Activated CD4-positive, alpha-beta memory T cell treated with anti-CD3 and anti-CD28 coated beads, Interleukin-2, amount 10 ng/mL, durations not matched to agents 7 days and 5 days (primary cell): ENCODE measurements at regions of chr11 and their contacts with region 1.

Region 1: GRCh38 chr11:75399344-75400145 is at the start of gene RPS3:
- DNase-seq: peak; percentile 92
- H3K4me3 Mint-ChIP-seq: peak within 1 kb of the TSS; percentile 96
- H3K27ac Mint-ChIP-seq: peak within 1 kb of the TSS; percentile 98
- H3K4me1 Mint-ChIP-seq: peaks cover 46% of the 10 kb centered on the region
- H3K27me3 Mint-ChIP-seq: peaks cover 6% of the 10 kb centered on the region
- total RNA-seq, gene RPS3: 2,828 to 2,853 TPM

Region 2: DNA sequence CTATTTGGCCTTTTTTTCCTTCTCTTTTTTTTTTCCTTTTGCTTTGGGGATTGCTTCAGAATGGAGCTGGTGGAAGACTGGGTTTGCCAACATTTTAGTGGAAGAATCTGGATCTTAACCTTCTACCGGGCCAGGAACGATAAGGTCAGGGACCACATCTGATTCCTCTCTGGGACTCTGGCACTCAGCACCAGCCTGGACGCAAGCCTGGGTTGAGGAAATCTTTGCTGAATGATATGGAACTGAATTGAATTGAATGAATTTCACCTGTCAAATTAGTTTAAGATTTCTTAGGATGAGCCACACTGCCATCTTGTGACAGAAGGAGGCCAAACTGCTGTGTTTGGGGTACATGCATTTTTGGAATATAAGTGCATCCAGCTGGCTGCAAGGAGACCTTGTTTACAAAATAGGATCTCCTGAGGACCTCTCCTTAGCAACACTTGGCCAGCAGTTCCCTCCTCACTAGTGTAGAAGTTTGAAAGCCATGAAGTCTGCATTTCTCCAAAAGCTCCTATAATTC is 128.6 kb before region 1 on chr11:
- CTCF ChIA-PET with region 1: interaction called, 13 read pairs
- POLR2A ChIA-PET with region 1: interaction called, 29 read pairs
- DNase-seq: peak; percentile 41
- H3K4me3 Mint-ChIP-seq: no peak overlapping the region
- H3K27ac Mint-ChIP-seq: no peak overlapping the region
- H3K4me1 Mint-ChIP-seq: peaks cover 23% of the 10 kb centered on the region
- H3K27me3 Mint-ChIP-seq: no peaks in the 10 kb centered on the region

Region 3: DNA sequence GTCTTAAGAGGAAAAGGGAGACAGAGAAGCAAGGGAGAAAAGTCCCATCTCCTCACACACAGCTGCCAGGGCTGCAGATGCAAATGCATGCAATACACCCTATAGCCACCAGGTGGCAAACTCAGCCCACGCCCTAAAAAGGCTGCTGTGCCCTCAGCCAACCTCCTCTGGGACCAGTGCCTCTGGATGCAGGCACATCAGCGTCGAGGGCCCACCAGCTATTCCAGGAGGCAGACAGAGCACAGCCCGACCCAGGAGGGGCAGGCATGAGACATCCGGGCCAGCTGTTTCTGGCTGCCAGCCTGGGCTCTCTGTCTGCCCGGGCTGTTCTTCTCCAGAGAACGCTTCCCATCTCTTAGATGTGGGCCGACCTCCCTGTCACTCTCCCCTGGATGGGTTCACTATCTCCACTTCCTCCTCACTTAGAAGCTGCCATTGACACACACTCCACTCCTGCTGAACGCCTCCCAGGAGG is 119.3 kb before region 1 on chr11:
- CTCF ChIA-PET with region 1: interaction called, 13 read pairs
- POLR2A ChIA-PET with region 1: interaction called, 29 read pairs
- DNase-seq: peak; percentile 82
- H3K4me3 Mint-ChIP-seq: no peak overlapping the region
- H3K27ac Mint-ChIP-seq: no peak overlapping the region
- H3K4me1 Mint-ChIP-seq: peaks cover 24% of the 10 kb centered on the region
- H3K27me3 Mint-ChIP-seq: no peaks in the 10 kb centered on the region

Region 4: DNA sequence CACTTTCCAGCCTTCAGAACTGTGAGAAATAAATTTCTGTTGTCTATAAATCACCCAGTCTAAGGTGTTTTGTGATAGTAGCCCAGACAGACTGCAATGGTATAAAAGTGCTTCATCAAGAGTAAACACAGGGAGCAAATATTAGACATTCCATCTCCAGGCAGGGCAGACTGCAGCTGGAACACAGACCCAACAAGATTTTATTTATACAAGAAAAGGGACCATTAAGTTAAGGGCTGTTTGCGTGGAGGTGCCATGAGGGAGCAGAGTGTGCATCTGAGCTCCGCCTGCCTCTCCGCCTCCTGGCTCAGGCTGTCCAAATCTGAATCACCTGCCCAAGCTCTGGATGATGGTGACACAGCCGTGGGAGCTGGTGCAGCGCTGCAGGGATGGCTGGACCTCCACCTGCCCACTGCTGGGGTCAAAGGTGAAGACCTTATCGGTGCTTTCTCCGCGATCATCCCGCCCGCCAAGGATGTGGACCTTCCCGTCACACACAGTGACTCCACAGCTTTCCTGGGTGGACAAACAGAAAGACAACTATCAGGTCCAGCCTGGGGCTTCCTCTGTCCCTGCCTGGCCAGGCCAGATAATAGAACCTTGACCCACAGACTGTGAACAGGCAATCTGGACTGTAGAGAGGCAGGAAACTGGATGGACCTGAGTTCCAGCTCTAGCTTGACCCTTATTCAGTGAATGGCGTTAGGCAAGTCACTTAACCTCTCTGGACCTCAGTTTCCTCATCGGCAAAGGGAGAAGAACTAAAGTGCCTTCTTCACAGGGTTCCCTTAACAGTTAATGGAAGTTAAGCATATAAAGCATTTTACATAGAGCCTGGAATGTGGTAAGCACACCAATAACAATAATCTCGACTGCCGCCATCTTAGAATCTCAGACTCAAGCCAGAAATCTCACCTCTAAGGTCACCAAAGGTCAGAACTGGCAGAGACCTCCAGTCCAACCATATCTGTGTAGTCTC is 23.0 kb after region 1 on chr11:
- CTCF ChIA-PET with region 1: interaction called, 5 read pairs
- POLR2A ChIA-PET with region 1: interaction called, 11 read pairs
- DNase-seq: no peak
- H3K4me3 Mint-ChIP-seq: no peak overlapping the region
- H3K27ac Mint-ChIP-seq: no peak overlapping the region
- H3K4me1 Mint-ChIP-seq: no peaks in the 10 kb centered on the region
- H3K27me3 Mint-ChIP-seq: peaks cover 2% of the 10 kb centered on the region

Region 5: GRCh38 chr11:75428281-75428724 is 28.8 kb after region 1 on chr11:
- CTCF ChIA-PET with region 1: interaction called, 5 read pairs
- POLR2A ChIA-PET with region 1: interaction called, 24 read pairs
- DNase-seq: peak; percentile 72
- H3K4me3 Mint-ChIP-seq: peak overlapping the region; percentile 51
- H3K27ac Mint-ChIP-seq: no peak overlapping the region
- H3K4me1 Mint-ChIP-seq: peaks cover 30% of the 10 kb centered on the region
- H3K27me3 Mint-ChIP-seq: peaks cover 49% of the 10 kb centered on the region

Region 6: DNA sequence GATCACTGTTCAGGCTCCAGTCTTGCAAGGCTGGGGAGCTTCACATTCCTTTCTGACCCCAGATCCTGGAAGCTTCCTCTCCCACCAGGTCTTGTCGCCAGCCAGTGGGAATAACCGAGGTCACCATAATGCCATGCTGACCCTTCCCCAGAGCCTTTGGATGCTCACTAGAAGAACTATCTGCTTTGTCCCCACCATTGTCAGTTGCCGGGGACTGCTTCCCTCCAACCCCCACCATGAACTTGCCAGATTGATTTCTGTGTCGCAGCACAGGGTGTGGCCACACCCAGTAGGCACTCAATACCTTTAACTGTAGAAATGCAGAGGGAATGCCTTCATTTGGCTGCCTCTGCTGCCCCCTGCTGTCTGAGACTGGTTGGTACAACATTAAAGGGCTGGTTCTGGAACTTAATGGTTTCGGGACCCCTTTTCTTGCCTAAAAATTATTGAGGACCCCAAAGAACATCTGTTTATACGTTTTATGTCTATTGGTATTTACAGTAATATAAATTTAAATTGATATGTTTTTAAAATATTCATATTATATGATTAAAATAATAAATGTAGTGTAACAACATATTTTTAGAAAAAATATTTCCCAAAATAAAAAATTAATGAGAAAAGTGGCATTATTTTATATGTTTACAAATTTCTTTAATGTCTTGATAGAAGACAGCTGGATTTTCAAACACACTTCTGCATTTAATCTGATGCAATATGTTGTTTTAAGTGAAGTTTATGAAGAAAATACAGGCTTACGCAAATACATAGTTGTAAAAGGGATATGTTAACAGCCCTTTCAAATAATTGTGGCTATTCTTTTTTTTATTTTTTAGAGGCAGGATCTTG is 132.9 kb after region 1 on chr11:
- CTCF ChIA-PET with region 1: interaction called, 13 read pairs
- POLR2A ChIA-PET with region 1: interaction called, 16 read pairs
- DNase-seq: peak; percentile 88
- H3K4me3 Mint-ChIP-seq: peak overlapping the region; percentile 6
- H3K27ac Mint-ChIP-seq: peak overlapping the region; percentile 75
- H3K4me1 Mint-ChIP-seq: peaks cover 70% of the 10 kb centered on the region
- H3K27me3 Mint-ChIP-seq: peaks cover 5% of the 10 kb centered on the region